ENCODE measurements at regions of chr3 and their contacts with region 1.

Region 1: GRCh38 chr3:124281453-124282316 is 289.8 kb upstream of the ROPN1 start:
- DNase-seq: peak; percentile 79
- H3K4me3 ChIP-seq: no peak overlapping the region
- H3K27ac ChIP-seq: peak overlapping the region; percentile 82 to 90 (median 85)
- H3K4me1 ChIP-seq: peaks cover 50 to 74% (median 63%) of the 10 kb centered on the region in 4 donors
- H3K27me3 ChIP-seq: no peaks in the 10 kb centered on the region
- CTCF ChIP-seq: peak; percentile 54 to 69 (median 68)
- EP300 ChIP-seq: no peak
- POLR2A ChIP-seq: no peak

Region 2: GRCh38 chr3:124032648-124033359 is 248.9 kb before region 1 on chr3:
- intact Hi-C with region 1: loop called (anchors 5 kb)
- DNase-seq: peak; percentile 95
- H3K4me3 ChIP-seq: peak overlapping the region; percentile 68 to 90 (median 85)
- H3K27ac ChIP-seq: peak overlapping the region; percentile 82 to 92 (median 88)
- H3K4me1 ChIP-seq: peaks cover 9 to 39% (median 27%) of the 10 kb centered on the region in 4 donors
- H3K27me3 ChIP-seq: peaks cover 0 to 11% (median 0%) of the 10 kb centered on the region in 4 donors
- CTCF ChIP-seq: peak; percentile 61 to 93 (median 76)
- EP300 ChIP-seq: no peak
- POLR2A ChIP-seq: no peak